ENCODE measurements at regions of chr16 and their contacts with region 1.

Region 1: DNA sequence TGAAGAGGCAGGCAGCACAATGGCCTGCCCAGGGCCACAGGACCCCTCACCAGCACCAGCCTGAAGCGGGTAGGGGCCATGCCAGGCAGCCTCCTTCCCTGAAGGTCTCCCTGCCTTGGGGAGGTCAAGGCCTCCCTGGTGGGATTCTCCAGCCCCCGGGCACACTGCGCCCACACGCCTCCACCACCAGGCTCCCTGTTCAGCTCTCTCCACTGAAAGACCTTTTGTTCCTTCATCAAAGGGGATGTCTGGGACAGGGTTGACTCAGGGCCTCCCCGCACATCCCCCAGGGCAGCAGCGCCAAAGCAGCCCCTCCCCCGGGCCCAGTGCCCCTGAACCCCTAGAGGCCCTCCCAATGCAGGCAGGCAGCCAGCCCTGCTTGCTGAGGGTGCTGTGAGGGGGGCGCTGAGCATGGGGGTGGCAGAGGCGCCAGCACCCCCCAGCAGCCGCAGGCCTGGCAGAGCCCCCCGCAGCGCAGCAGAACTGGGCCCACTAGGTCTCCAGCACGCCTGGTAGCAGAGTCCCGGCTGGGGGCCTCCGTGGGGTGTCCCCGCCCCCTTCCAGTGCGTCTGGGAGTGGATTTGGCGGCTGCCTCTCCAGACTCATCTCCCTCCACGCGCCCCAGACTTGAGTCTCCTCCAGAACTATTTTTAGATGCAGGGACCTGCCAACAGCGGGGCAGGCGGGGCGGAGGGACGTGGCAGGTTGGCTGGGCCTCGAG is 13.1 kb downstream of the BCAR1 start:
- DNase-seq: peak; percentile 81 to 93 (median 91)
- ATAC-seq: peak; percentile 70 to 79
- H3K4me3 ChIP-seq: no peak overlapping the region
- H3K27ac ChIP-seq: peak overlapping the region; percentile 26
- H3K4me1 ChIP-seq: peaks cover 10% of the 10 kb centered on the region
- H3K27me3 ChIP-seq: no peaks in the 10 kb centered on the region

Region 2: DNA sequence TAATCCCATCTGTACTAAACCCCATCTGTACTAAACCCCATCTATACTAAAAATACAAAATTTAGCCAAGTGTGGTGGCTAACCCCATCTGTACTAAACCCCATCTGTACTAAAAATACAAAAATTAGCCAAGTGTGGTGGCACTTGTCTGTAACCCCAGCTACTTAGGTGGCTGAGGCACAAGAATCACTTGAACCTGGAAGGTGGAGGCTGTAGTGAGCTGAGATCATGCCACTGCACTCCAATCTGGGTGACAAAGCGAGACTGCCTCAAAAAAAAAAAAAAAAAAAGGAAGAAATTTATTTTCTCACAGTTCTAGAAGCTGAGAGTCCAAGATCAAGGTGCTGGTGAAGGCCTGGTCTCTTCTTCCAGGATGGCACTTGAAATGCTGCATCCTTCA is 77.9 kb before region 1 on chr16:
- intact Hi-C with region 1: no loop called
- DNase-seq: no peak
- ATAC-seq: no peak
- H3K4me3 ChIP-seq: no peak overlapping the region
- H3K27ac ChIP-seq: no peak overlapping the region
- H3K4me1 ChIP-seq: peaks cover 2% of the 10 kb centered on the region
- H3K27me3 ChIP-seq: no peaks in the 10 kb centered on the region

Region 3: GRCh38 chr16:75379911-75380847 is 141.9 kb after region 1 on chr16:
- intact Hi-C with region 1: loop called in 3 of 4 experiments (anchors 5 kb)
- DNase-seq: peak in 1 of 3 donors; percentile 49
- ATAC-seq: peak in 1 of 2 donors; percentile 32
- H3K4me3 ChIP-seq: no peak overlapping the region
- H3K27ac ChIP-seq: no peak overlapping the region
- H3K4me1 ChIP-seq: peaks cover 2% of the 10 kb centered on the region
- H3K27me3 ChIP-seq: no peaks in the 10 kb centered on the region

Region 4: GRCh38 chr16:75385507-75386152 is 147.3 kb after region 1 on chr16:
- intact Hi-C with region 1: loop called in 3 of 4 experiments (anchors 5 kb)
- DNase-seq: no peak
- ATAC-seq: peak in 1 of 2 donors; percentile 48
- H3K4me3 ChIP-seq: no peak overlapping the region
- H3K27ac ChIP-seq: no peak overlapping the region
- H3K4me1 ChIP-seq: peaks cover 3% of the 10 kb centered on the region
- H3K27me3 ChIP-seq: no peaks in the 10 kb centered on the region

Region 5: GRCh38 chr16:75398333-75398732 is 160.0 kb after region 1 on chr16:
- intact Hi-C with region 1: no loop called
- DNase-seq: no peak
- ATAC-seq: no peak
- H3K4me3 ChIP-seq: no peak overlapping the region
- H3K27ac ChIP-seq: no peak overlapping the region
- H3K4me1 ChIP-seq: peaks cover 1% of the 10 kb centered on the region
- H3K27me3 ChIP-seq: no peaks in the 10 kb centered on the region